ENCODE measurements at regions of chr9 and their contacts with region 1.

Region 1: DNA sequence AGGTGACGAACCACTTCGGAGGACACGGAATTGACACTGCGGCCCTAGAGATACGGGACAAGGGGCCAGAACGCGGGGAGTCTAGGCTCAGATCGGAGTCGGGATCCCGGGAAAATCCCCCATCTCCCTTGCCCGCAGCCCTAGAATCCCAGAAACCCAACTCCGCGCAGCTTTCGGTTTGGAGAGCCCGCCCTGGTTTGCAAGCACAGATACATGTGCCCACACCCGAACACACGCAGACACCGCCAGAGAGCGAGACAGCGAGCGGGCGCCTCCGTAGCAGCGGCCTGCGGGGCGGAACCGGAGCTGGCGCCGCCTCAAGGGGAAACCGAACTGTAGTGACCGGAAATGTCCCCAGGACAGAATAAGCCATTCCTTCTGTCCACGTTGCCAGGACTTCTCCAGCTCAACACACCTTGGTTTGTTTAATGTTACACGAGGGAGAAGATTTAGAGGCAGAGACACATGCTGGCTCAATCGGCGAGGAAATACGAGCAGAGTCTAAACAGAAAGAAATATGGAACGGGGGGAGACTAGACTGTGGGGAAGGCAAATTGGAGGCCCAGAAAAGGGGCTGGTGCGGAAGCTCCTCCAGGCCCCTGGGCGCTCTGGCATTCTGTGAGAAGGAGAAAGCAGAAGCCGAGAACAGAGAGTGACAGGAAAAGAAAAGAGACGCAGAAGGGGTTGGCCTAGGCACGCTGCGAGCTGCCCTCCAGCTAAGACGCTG is 2.9 kb upstream of the PAX5 start:
- DNase-seq: peak; percentile 67
- ATAC-seq: peak; percentile 62
- H3K4me3 Mint-ChIP-seq: peak overlapping the region; percentile 74
- H3K27ac Mint-ChIP-seq: peak overlapping the region; percentile 14
- H3K4me1 Mint-ChIP-seq: peaks cover 35% of the 10 kb centered on the region
- H3K27me3 Mint-ChIP-seq: peaks cover 66% of the 10 kb centered on the region

Region 2: DNA sequence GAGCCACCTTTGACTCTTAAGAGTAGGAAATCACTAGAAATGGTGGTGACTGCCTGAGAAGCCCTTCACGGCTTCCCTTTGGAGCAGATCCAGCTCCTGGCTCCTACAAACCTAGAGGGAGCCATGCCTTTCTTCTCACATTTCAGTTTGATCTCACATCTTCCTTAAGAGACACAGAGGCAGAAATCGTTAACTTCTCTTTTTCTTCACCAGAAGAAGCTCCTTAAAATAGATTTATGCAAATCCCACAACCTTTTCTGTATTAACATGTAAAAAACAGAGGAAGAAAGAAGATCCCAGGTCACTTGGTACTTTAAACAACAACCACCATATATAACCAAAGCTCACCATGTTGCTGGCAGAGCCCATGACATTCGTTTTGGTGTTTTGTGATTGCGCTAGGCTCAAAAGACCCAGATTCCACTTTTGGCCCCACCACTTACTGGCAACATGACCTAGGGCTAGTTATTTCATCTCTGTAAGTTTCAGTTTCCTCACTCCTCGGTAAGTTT is 32.5 kb before region 1 on chr9:
- CTCF ChIA-PET with region 1: no interaction called
- POLR2A ChIA-PET with region 1: no interaction called
- intact Hi-C with region 1: no loop called
- DNase-seq: no peak
- ATAC-seq: no peak
- H3K4me3 Mint-ChIP-seq: no peak overlapping the region
- H3K27ac Mint-ChIP-seq: no peak overlapping the region
- H3K4me1 Mint-ChIP-seq: no peaks in the 10 kb centered on the region
- H3K27me3 Mint-ChIP-seq: peaks cover 47% of the 10 kb centered on the region

Region 3: DNA sequence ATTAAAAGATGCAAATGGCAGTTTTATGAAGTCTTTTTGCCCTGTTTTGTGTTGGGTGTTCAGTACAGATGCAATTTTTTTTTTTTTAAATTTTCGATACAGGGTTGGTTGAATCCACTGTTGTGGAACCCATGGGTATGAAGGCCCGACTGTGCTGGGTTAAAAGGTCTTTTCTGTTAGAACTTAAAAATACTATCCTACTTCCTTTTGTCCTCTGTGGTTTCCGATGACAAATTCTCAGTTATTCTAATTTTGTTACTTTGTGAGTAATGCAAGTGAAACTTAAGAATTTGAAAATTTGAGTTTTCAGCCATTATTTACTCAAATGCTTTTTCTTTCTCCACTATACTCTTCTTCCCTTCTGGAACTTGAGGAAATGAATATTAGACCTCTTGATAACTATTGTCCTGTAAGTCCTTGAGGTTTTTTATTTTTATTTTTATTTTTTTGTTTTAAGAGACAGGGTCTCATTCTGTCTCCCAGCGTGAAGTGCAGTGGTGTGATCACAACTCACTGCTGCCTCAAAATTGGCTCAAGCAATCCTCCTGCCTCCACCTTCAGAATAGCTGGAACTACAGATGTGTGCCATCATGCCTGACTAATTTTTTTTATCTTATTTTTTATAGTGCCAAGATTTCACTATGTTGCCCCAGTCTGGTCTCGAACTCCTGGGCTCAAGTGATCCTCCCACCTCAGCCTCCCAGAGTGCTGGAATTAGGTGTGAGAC is 150.9 kb after region 1 on chr9:
- CTCF ChIA-PET with region 1: no interaction called
- POLR2A ChIA-PET with region 1: no interaction called
- intact Hi-C with region 1: loop called in 1 of 2 experiments (anchors 5 kb)
- DNase-seq: peak; percentile 30
- ATAC-seq: peak; percentile 87
- H3K4me3 Mint-ChIP-seq: peak overlapping the region; percentile 36
- H3K27ac Mint-ChIP-seq: peak overlapping the region; percentile 90
- H3K4me1 Mint-ChIP-seq: peaks cover 44% of the 10 kb centered on the region
- H3K27me3 Mint-ChIP-seq: no peaks in the 10 kb centered on the region

Region 4: DNA sequence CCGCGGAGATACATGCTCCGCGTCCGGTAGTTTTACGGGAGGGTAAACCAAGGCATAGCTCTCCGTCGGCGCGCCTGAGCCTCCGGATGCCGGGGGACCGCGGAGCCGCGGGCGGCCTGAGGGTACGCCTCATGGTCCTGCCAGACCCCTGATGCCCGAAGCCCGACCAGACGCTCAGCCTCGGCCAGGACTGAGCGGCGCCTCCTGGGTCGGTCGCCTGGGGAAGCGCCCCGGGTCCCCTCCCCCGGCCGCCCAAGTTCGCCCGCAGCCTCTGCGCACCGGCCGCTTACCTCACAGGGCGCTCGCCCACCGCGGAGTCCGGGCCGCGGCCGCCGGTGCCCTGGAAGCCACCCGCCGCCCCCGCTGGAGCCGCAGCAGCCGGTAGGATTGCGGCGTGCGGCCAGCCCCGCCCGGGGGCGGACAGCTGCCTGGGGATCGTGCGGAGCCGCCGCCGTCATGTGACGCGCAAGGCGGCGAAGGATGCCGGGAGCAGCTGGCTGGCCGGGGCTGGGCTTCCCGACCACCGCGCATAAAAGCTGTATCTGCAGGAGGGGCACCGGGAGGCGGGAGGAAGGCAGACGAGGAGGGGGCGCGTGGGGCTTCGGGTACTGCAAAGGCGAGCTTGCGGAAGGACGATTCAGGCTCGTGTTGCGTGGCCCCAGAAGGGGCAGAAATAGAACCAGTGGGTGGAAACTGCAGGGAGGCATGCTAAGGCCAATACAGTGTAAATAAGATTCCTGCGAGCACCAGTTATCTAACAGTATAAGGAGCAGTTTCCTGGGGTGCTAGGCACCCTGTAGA is 539.2 kb after region 1 on chr9 and contains the start of gene FBXO10:
- CTCF ChIA-PET with region 1: interaction called, 3 read pairs
- POLR2A ChIA-PET with region 1: no interaction called
- intact Hi-C with region 1: loop called (anchors 10 kb)
- DNase-seq: peak; percentile 68
- ATAC-seq: peak; percentile 69
- H3K4me3 Mint-ChIP-seq: peak within 1 kb of the TSS; percentile 75
- H3K27ac Mint-ChIP-seq: peak within 1 kb of the TSS; percentile 63
- H3K4me1 Mint-ChIP-seq: peaks cover 17% of the 10 kb centered on the region
- H3K27me3 Mint-ChIP-seq: no peaks in the 10 kb centered on the region
- total RNA-seq, gene FBXO10: 2.6 TPM

Measured in activated CD4-positive, alpha-beta T cell treated with anti-CD3 and anti-CD28 coated beads for 36 hours (primary cell).